Uterus (tissue), 4 donors: ENCODE measurements at regions of chr21 and their contacts with region 1.

Region 1: GRCh38 chr21:40120940-40121575 is 253.8 kb downstream of the PCP4 start:
- DNase-seq: no peak
- H3K4me3 ChIP-seq: no peak overlapping the region
- H3K27ac ChIP-seq: no peak overlapping the region
- H3K4me1 ChIP-seq: no peaks in the 10 kb centered on the region
- H3K27me3 ChIP-seq: no peaks in the 10 kb centered on the region
- CTCF ChIP-seq: peak; percentile 77 to 87 (median 84)
- POLR2A ChIP-seq: no peak

Region 2: GRCh38 chr21:39867198-39867650 is 253.8 kb before region 1 on chr21 and contains the start of gene PCP4:
- intact Hi-C with region 1: loop called (anchors 5 kb)
- DNase-seq: peak; percentile 45 to 69
- H3K4me3 ChIP-seq: peak within 1 kb of the TSS in 1 of 2 donors; percentile 6
- H3K27ac ChIP-seq: peak within 1 kb of the TSS; percentile 1 to 41
- H3K4me1 ChIP-seq: no peaks in the 10 kb centered on the region
- H3K27me3 ChIP-seq: no peaks in the 10 kb centered on the region
- CTCF ChIP-seq: peak; percentile 67 to 74 (median 72)
- POLR2A ChIP-seq: no peak
- total RNA-seq, gene PCP4: 5.3 to 35.9 (median 20.3) TPM